MCF 10A (cell line): ENCODE measurements at regions of chr4 and their contacts with region 1.

Region 1: GRCh38 chr4:80989921-80990544 is 40.5 kb upstream of the BMP3 start:
- DNase-seq: peak; percentile 70
- H3K4me3 Mint-ChIP-seq: no peak overlapping the region
- H3K27ac Mint-ChIP-seq: no peak overlapping the region
- H3K4me1 Mint-ChIP-seq: no peaks in the 10 kb centered on the region
- H3K27me3 Mint-ChIP-seq: no peaks in the 10 kb centered on the region
- CTCF ChIP-seq: peak; percentile 66

Region 2: GRCh38 chr4:80454040-80454439 is 536.0 kb before region 1 on chr4:
- CTCF ChIA-PET with region 1: interaction called, 5 read pairs
- POLR2A ChIA-PET with region 1: no interaction called
- intact Hi-C with region 1: loop called (anchors 5 kb)
- DNase-seq: peak; percentile 53
- H3K4me3 Mint-ChIP-seq: no peak overlapping the region
- H3K27ac Mint-ChIP-seq: peak overlapping the region; percentile 84
- H3K4me1 Mint-ChIP-seq: peaks cover 12% of the 10 kb centered on the region
- H3K27me3 Mint-ChIP-seq: no peaks in the 10 kb centered on the region
- CTCF ChIP-seq: no peak

Region 3: DNA sequence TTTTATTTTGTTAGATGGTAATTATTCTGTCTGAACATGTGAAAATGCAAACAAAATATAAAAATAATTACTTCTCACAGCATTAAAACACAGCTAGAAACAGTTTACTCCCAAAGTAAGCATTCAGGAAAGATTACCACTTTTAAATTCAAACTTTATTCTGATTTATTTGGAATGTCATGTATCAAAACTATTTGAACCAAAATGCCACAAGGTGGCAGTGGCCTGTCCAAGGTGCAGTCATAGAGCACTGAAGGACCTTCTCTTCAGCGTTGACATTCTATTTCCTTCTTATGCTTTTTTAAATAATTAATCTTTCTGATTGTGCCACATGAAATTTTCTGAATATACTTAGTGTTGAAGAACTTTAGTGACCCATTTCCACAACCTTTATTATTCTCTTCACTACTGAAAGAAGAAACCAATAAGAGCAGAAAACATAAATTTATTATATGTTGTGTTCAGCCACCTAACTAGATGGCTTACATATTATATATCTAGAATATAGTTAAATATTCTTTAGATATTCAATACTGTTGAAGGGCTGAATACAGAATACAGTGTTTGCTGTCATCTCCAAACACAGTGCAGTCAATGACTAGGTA is 370.9 kb before region 1 on chr4:
- CTCF ChIA-PET with region 1: interaction called, 12 read pairs
- POLR2A ChIA-PET with region 1: no interaction called
- intact Hi-C with region 1: loop called (anchors 2 kb)
- DNase-seq: peak; percentile 38
- H3K4me3 Mint-ChIP-seq: no peak overlapping the region
- H3K27ac Mint-ChIP-seq: no peak overlapping the region
- H3K4me1 Mint-ChIP-seq: no peaks in the 10 kb centered on the region
- H3K27me3 Mint-ChIP-seq: no peaks in the 10 kb centered on the region
- CTCF ChIP-seq: peak; percentile 40